Posterior vena cava (tissue), 2 donors: ENCODE measurements at regions of chr6 and their contacts with region 1.

Region 1: GRCh38 chr6:126180585-126180984 is 159.3 kb upstream of the CENPW start:
- DNase-seq: no peak

Region 2: GRCh38 chr6:126033696-126034095 is 146.9 kb before region 1 on chr6:
- intact Hi-C with region 1: loop called in 1 of 2 experiments (anchors 10 kb)
- DNase-seq: no peak

Region 3: GRCh38 chr6:126625019-126625418 is 444.4 kb after region 1 on chr6:
- intact Hi-C with region 1: no loop called
- DNase-seq: no peak